SK-N-SH (cell line): ENCODE measurements at regions of chr17 and their contacts with region 1.

Region 1: DNA sequence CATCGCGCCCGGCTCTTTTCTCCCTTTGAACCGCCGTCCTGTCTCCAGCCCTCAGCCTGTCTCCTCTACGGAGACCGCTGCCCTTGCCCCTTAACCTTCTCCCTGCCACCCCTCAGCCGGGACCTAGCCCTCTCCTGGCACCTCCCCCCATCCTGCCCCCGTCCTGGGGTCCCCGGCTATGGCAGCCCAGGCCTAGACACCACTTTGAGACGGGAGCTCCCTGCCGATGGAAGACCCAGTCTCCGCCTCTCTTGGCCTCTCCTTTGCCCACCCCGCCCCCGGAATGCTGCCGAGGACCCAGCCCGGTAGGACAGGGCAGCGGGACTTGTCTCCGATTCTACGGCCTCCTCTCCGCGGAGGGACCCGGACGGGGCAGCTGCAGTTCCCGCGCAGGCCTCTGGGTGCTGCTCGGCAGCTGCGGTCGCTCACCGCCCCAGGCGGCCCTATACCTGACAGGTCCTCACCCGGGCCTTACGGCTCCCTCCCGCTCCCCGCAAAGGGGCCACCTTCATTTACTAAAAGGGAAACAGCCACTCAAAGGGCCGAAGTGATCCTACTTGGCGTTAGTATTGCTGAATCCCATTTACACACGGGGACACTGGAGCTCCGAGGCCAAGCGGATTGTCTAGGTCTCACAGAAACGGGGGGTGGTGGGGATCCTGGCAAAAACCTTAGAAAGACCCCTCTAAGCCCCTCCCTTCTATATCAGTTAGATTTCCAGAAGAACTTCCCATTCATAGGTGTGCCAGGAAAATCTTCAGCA is 32.6 kb upstream of the TAC4 start:
- DNase-seq: peak; percentile 97
- H3K4me3 ChIP-seq: peak overlapping the region in 1 of 2 experiments; percentile 13; a peak in 2 of 4 replicates
- H3K27ac ChIP-seq: no peak overlapping the region
- H3K4me1 ChIP-seq: peaks cover 0 to 9% of the 10 kb centered on the region in 2 experiments; a peak in 1 of 4 replicates
- H3K27me3 ChIP-seq: peaks cover 78% of the 10 kb centered on the region
- CTCF ChIP-seq: peak; percentile 96
- EP300 ChIP-seq: no peak
- RAD21 ChIP-seq: peak; percentile 86

Region 2: DNA sequence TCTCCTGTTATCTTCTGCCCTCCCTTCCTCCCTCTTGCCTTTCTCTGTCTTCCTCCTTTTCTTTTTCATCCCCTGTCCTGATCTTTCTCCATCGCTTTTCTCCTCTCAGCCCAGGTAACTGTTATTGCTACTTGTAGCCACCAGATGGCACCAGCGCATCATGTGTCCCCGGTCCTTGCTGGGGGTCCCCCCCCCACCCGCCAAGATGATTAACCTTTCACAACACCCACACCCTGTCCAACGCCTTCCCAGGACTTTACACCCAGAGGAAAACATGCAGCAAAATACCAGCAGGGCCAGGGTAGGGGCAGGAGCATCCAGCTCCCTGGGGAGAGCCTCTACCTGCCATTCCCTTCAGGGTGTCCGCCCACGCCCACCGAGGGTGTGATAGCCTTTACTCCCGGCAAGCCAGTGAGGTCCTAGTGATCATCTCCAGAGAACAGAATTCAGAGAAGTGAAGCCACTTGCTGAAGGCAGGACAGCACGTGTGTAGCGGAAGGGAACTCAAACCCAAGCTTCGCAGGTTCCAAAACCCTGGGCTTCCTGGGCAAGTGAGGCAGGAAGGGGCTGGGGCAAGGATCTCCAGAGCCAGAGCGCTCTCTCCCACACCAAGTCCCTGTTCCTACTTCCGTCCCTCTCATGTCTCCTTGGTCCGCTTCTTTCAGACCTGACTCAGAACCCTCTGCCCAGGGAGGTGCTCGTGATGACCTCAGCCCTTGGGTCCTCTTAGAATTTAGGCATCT is 19.2 kb before region 1 on chr17:
- CTCF ChIA-PET with region 1: interaction called, 65 read pairs
- POLR2A ChIA-PET with region 1: no interaction called
- DNase-seq: peak; percentile 93
- H3K4me3 ChIP-seq: no peak overlapping the region
- H3K27ac ChIP-seq: no peak overlapping the region
- H3K4me1 ChIP-seq: no peaks in the 10 kb centered on the region
- H3K27me3 ChIP-seq: peaks cover 6% of the 10 kb centered on the region; the same call in 1 of the 2 replicates
- CTCF ChIP-seq: peak; percentile 85
- EP300 ChIP-seq: no peak
- RAD21 ChIP-seq: peak; percentile 84

Region 3: GRCh38 chr17:49899191-49899485 is 18.7 kb after region 1 on chr17:
- CTCF ChIA-PET with region 1: interaction called, 25 read pairs
- POLR2A ChIA-PET with region 1: no interaction called
- DNase-seq: no peak
- H3K4me3 ChIP-seq: no peak overlapping the region
- H3K27ac ChIP-seq: no peak overlapping the region
- H3K4me1 ChIP-seq: no peaks in the 10 kb centered on the region; a peak in 1 of 4 replicates
- H3K27me3 ChIP-seq: peaks cover 98% of the 10 kb centered on the region
- CTCF ChIP-seq: peak; percentile 35
- EP300 ChIP-seq: no peak
- RAD21 ChIP-seq: no peak; the same call in 1 of the 2 replicates

Region 4: DNA sequence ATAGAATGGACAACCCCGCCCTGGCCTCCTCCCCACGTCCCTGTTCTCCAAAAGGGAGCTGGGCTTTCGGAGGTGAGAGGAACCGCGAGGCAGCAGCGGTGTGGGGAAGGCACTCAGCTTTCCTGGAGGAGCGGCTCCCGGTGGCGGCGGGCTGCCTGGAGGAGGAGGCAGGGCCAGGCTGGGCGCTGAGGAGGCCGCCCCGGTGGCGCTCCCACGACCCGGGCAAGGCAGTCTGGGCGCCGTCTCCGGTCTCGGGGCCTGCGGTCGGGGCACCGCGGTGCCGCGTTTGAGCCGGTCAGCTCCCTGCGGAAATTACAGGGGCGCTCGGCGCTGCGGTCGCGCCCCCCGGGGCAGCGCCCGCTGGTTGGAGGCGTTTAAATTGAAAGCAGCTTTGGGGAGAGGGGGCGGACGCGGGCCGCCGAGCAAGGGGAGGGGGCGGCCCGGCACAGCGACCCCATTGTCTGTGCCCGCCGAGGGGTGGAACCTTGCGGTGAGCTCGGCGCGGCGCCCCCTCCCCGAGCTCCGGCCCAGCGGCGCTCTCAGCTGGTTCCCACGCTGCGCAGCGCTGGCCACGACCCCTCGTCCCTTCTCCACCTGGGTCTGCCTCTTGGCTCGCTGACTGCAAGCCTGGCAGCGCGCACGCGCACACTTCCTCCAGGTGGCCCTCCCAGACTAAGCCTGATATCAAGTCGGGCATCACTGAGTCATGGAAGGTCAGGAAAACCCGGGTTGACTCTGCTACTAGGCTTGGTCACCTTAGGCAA is 29.8 kb after region 1 on chr17:
- CTCF ChIA-PET with region 1: interaction called, 32 read pairs
- POLR2A ChIA-PET with region 1: no interaction called
- DNase-seq: peak; percentile 73
- H3K4me3 ChIP-seq: peak overlapping the region in 1 of 2 experiments; percentile 15; a peak in 1 of 4 replicates
- H3K27ac ChIP-seq: no peak overlapping the region
- H3K4me1 ChIP-seq: peaks cover 0 to 3% of the 10 kb centered on the region in 2 experiments; a peak in 1 of 4 replicates
- H3K27me3 ChIP-seq: peaks cover 93% of the 10 kb centered on the region
- CTCF ChIP-seq: no peak
- EP300 ChIP-seq: no peak
- RAD21 ChIP-seq: no peak

Region 5: DNA sequence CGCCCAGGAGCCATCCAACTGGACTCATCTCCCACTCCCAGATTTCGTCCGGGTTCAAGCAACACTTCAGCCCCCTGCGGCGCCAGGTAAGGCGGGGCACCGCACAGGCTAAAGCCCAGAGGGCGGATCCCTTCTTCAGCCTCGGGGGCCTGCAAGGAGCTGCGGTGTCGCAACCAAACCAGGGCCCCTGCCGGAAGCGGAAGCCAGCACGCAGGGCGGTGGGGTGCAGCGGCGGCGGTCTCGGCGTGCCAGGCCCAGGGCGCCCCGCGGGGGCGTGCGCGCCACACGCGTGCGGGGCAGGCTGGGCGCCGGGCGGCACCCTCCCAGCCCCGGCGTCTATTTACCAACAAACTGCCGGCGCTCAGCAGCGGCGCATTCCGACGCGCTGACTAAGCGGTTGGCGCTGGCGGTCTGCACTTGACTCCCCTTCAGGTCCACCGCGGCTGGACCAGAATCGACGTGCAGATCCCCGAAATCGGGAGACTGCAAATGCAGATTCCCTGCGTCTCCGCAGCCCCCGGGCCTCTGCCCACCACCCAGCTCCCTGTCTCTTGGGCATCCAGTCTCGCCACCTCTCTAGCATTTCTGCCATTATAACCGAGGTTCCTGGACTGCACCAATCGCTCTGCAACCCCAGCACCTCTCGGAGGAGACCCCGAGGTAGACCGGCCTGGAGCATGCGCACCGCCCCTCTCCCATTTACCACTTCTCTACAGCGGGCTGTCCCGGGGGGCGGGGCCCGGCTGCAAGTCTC is 88.1 kb after region 1 on chr17:
- CTCF ChIA-PET with region 1: interaction called, 28 read pairs
- POLR2A ChIA-PET with region 1: no interaction called
- DNase-seq: peak; percentile 97
- H3K4me3 ChIP-seq: peak overlapping the region; percentile 50
- H3K27ac ChIP-seq: no peak overlapping the region
- H3K4me1 ChIP-seq: peaks cover 0 to 13% of the 10 kb centered on the region in 2 experiments; a peak in 1 of 4 replicates
- H3K27me3 ChIP-seq: peaks cover 100% of the 10 kb centered on the region
- CTCF ChIP-seq: no peak
- EP300 ChIP-seq: no peak
- RAD21 ChIP-seq: no peak

Region 6: DNA sequence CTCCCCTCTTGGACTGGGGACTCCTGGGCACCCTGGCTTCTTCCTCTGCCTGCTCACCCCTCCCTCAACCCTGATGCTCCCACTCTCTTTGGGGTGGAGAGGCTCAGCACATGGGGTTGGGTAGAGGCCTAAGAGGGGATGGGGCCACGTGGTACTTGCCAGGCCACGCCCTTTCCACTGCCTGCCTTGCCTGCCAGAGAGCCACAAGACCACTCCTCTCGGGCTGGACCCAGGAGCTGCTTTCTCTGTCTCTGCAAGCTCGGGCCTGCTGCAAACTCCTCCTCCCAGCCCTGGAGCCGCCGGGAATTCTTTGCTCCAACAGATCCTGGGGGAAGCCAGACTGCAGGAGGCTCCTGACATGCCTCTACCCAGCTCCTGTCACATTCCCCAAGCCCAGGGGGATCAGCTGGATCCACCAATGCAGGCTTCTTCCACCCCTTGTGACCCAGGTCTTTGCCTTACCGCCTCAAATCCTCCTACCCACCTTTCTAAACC is 100.3 kb after region 1 on chr17:
- CTCF ChIA-PET with region 1: interaction called, 1,665 read pairs
- POLR2A ChIA-PET with region 1: no interaction called
- DNase-seq: peak; percentile 42
- H3K4me3 ChIP-seq: no peak overlapping the region
- H3K27ac ChIP-seq: no peak overlapping the region
- H3K4me1 ChIP-seq: no peaks in the 10 kb centered on the region
- H3K27me3 ChIP-seq: peaks cover 66% of the 10 kb centered on the region
- CTCF ChIP-seq: no peak
- EP300 ChIP-seq: no peak
- RAD21 ChIP-seq: no peak